Adrenal gland (tissue), 19 donors: ENCODE measurements at regions of chr20 and their contacts with region 1.

Region 1: GRCh38 chr20:815914-816606 is 17.5 kb upstream of the FAM110A start:
- DNase-seq: peak in 6 of 7 donors; percentile 38 to 79 (median 62)
- H3K4me3 ChIP-seq: no peak overlapping the region
- H3K27ac ChIP-seq: no peak overlapping the region
- H3K4me1 ChIP-seq: no peaks in the 10 kb centered on the region
- H3K27me3 ChIP-seq: peaks cover 19% of the 10 kb centered on the region
- CTCF ChIP-seq: peak; percentile 94 to 99 (median 98)
- POLR2A ChIP-seq: no peak

Region 2: DNA sequence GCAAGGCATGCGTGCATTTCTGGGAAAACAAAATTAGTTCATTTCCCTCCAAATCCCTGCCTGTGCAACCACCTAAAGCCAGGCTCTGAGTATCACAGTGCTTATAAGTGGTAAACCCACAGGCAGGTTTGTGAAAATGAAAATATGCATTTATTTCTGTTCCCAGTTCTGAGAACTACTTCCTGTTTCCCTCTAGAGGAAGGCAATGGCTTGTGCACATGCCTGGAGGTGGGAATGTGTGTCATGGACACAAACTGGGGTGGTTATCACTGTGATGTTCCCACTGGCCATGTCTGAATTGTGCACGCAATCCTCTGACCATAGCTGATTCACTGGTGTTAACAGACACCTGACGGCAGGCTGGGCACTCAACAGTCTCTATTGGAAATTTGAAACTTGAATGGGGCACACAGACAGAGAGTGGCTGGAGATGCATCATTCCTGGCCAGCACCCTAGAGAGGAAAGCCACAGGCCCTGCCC is 43.7 kb after region 1 on chr20:
- intact Hi-C with region 1: no loop called
- DNase-seq: no peak
- H3K4me3 ChIP-seq: no peak overlapping the region
- H3K27ac ChIP-seq: no peak overlapping the region
- H3K4me1 ChIP-seq: no peaks in the 10 kb centered on the region
- H3K27me3 ChIP-seq: no peaks in the 10 kb centered on the region
- CTCF ChIP-seq: no peak
- POLR2A ChIP-seq: no peak

Region 3: GRCh38 chr20:956330-956951 is 140.4 kb after region 1 on chr20:
- intact Hi-C with region 1: loop called (anchors 1 to 5 kb)
- DNase-seq: peak; percentile 54 to 83 (median 68)
- H3K4me3 ChIP-seq: no peak overlapping the region
- H3K27ac ChIP-seq: no peak overlapping the region
- H3K4me1 ChIP-seq: no peaks in the 10 kb centered on the region
- H3K27me3 ChIP-seq: peaks cover 6% of the 10 kb centered on the region
- CTCF ChIP-seq: peak; percentile 97 to 99 (median 98)
- POLR2A ChIP-seq: no peak

Region 4: GRCh38 chr20:1212607-1213396 is 396.7 kb after region 1 on chr20:
- intact Hi-C with region 1: loop called in 1 of 2 experiments (anchors 5 kb)
- DNase-seq: peak; percentile 54 to 88 (median 75)
- H3K4me3 ChIP-seq: no peak overlapping the region
- H3K27ac ChIP-seq: no peak overlapping the region
- H3K4me1 ChIP-seq: no peaks in the 10 kb centered on the region
- H3K27me3 ChIP-seq: peaks cover 3% of the 10 kb centered on the region
- CTCF ChIP-seq: peak; percentile 63 to 81 (median 74)
- POLR2A ChIP-seq: no peak